Activated CD8-positive, alpha-beta T cell treated with anti-CD3 and anti-CD28 coated beads, Interleukin-2, amount 10 ng/mL, durations not matched to agents 7 days and 5 days (primary cell): ENCODE measurements at regions of chr6 and their contacts with region 1.

Region 1: GRCh38 chr6:31597006-31597405 is 4.2 kb upstream of the NCR3 start:
- DNase-seq: peak; percentile 68
- ATAC-seq: peak; percentile 68
- H3K4me3 Mint-ChIP-seq: no peak overlapping the region
- H3K27ac Mint-ChIP-seq: peak overlapping the region; percentile 43
- H3K4me1 Mint-ChIP-seq: peaks cover 59% of the 10 kb centered on the region
- H3K27me3 Mint-ChIP-seq: no peaks in the 10 kb centered on the region

Region 2: GRCh38 chr6:31493875-31494694 is 102.9 kb before region 1 on chr6:
- CTCF ChIA-PET with region 1: interaction called, 28 read pairs
- POLR2A ChIA-PET with region 1: interaction called, 7 read pairs
- DNase-seq: peak; percentile 87
- ATAC-seq: peak; percentile 62
- H3K4me3 Mint-ChIP-seq: peak overlapping the region; percentile 91
- H3K27ac Mint-ChIP-seq: peak overlapping the region; percentile 95
- H3K4me1 Mint-ChIP-seq: peaks cover 62% of the 10 kb centered on the region
- H3K27me3 Mint-ChIP-seq: no peaks in the 10 kb centered on the region

Region 3: DNA sequence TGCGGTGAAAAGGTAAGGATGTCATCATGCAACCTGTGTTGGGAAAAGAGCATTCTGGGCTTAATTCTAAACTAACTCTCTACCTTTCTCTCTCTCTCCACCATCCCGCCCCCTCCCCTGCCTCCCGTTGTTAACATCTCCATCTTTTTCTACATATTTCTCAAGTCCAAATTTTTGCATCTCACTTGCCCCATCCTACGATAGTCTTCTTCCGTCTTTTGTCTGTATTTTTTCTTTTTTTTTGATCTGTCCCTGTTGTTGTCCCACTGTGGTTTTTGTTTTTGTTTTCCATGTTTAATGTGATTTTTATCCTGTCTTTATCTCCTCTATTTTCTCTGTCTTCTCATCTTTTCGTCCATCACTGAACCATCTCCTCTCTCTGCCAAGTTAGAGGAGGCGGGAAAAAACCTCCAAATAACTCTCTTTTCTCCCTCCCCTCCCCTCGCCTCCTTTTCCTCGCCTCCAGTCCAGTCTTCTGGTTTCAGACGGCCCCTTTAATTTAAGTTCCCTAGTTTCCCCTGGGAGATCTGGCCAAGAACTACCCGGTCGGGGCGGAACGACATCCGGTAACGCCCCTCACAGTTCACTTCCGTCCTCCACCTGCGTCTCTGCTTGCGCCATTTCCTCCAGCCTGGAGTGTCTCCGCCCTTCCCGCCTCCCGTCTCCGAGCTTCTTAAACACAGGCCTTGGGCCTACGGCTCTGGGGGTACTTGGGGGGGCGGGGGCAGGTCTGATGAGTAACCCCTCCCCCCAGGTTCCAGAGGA is 49.9 kb before region 1 on chr6 and contains the start of gene NFKBIL1:
- CTCF ChIA-PET with region 1: interaction called, 676 read pairs
- POLR2A ChIA-PET with region 1: interaction called, 23 read pairs
- DNase-seq: peak; percentile 96
- ATAC-seq: peak; percentile 89
- H3K4me3 Mint-ChIP-seq: peak within 1 kb of the TSS; percentile 84
- H3K27ac Mint-ChIP-seq: peak within 1 kb of the TSS; percentile 90
- H3K4me1 Mint-ChIP-seq: peaks cover 56% of the 10 kb centered on the region
- H3K27me3 Mint-ChIP-seq: no peaks in the 10 kb centered on the region
- total RNA-seq, gene NFKBIL1: 13.5 to 14.2 TPM

Region 4: GRCh38 chr6:31568537-31568961 is 28.5 kb before region 1 on chr6:
- CTCF ChIA-PET with region 1: interaction called, 928 read pairs
- POLR2A ChIA-PET with region 1: interaction called, 388 read pairs
- DNase-seq: peak; percentile 86
- ATAC-seq: peak; percentile 74
- H3K4me3 Mint-ChIP-seq: peak overlapping the region; percentile 26
- H3K27ac Mint-ChIP-seq: peak overlapping the region; percentile 56
- H3K4me1 Mint-ChIP-seq: peaks cover 63% of the 10 kb centered on the region
- H3K27me3 Mint-ChIP-seq: peaks cover 22% of the 10 kb centered on the region

Region 5: DNA sequence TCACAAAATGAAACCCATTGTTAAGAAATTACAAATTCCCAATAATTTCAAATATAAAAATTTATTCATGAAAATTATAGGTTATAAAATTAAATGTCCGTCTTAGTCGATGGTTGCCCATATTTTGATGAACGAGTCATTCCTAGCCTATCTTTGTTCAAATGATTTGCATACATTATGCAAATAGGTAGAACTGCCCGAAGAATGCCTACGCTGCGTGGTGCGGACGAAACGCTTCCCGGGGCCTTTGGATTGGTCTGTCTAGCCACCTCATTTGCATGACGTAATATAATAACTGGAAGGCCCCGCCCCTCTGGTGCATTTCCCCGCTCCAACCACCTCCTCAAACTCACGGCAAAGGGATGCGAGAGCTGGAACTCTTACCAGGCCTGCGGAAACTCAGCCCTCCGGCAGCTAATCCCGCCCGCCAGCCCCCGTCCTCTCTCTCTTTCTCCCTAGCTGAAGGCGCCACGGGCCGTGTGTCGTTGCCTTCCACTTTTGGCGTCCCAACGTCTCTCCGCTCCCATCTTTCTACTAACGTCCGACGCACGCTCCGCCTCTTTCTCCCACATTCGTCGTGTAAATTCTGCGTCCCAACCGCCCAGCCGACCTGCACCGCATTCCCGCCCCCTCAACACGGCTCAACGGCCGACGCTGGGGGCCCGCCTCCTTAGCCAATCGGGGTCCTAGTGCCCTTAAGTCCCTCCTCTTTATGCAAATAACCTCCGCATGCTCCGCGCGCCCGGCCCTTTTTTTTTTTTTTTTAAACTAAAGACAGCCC is 23.0 kb after region 1 on chr6:
- CTCF ChIA-PET with region 1: interaction called, 130 read pairs
- POLR2A ChIA-PET with region 1: interaction called, 3 read pairs
- DNase-seq: peak; percentile 99
- ATAC-seq: peak; percentile 89
- H3K4me3 Mint-ChIP-seq: peak overlapping the region; percentile 93
- H3K27ac Mint-ChIP-seq: peak overlapping the region; percentile 95
- H3K4me1 Mint-ChIP-seq: peaks cover 53% of the 10 kb centered on the region
- H3K27me3 Mint-ChIP-seq: no peaks in the 10 kb centered on the region